Sigmoid colon (tissue), 7 donors: ENCODE measurements at regions of chr5 and their contacts with region 1.

Region 1: DNA sequence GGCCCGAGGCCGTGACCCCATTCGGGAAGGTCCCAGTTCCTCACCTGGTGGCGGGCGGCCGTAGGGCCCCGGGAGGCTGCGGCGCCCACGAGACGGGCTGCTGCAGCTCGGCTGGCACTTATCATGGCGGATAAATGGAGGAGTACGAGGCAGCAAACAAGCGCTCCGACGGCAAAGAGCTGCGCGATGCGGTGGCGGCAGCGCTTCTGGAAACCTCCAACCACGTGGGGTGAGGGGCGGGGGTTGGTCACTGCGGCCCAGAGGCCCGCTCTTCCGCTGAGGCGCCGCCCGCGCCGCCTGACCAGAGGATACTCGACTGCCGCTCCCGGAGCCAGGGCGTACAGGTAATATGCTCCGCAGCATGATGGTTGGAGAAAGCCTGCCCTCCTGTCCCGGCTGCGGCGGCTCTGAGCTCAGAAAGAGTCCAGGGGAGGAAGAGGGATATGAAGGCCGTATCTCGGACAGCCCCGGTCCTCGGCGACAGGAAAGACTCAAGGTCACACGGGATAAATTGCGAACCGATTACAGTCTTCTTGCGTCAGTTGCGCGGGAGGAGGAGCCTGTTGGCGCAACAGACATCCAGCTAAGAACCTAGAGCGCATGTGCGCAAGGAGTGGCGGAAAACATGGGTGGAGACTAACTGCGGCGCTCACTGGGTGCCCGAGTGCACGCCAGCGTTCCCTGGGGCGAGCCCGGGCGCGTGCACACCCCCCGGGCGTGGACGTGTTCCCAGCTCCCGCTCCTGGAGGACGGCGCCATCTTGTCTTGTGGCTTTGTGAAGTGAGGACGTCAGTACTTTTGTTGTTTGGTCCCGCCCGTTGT is at the start of gene HSPA9:
- DNase-seq: peak; percentile 99
- H3K4me3 ChIP-seq: peak within 1 kb of the TSS; percentile 84 to 98 (median 92)
- H3K27ac ChIP-seq: peak within 1 kb of the TSS; percentile 97 to 100 (median 98)
- H3K4me1 ChIP-seq: peaks cover 0 to 26% (median 17%) of the 10 kb centered on the region in 4 donors
- H3K27me3 ChIP-seq: no peaks in the 10 kb centered on the region
- CTCF ChIP-seq: peak in 1 of 4 experiments; percentile 51
- EP300 ChIP-seq: peak in 3 of 4 donors; percentile 0 to 79 (median 31)
- POLR2A ChIP-seq: peak; percentile 78 to 92
- total RNA-seq, gene HSPA9: 148 to 244 (median 192) TPM

Region 2: DNA sequence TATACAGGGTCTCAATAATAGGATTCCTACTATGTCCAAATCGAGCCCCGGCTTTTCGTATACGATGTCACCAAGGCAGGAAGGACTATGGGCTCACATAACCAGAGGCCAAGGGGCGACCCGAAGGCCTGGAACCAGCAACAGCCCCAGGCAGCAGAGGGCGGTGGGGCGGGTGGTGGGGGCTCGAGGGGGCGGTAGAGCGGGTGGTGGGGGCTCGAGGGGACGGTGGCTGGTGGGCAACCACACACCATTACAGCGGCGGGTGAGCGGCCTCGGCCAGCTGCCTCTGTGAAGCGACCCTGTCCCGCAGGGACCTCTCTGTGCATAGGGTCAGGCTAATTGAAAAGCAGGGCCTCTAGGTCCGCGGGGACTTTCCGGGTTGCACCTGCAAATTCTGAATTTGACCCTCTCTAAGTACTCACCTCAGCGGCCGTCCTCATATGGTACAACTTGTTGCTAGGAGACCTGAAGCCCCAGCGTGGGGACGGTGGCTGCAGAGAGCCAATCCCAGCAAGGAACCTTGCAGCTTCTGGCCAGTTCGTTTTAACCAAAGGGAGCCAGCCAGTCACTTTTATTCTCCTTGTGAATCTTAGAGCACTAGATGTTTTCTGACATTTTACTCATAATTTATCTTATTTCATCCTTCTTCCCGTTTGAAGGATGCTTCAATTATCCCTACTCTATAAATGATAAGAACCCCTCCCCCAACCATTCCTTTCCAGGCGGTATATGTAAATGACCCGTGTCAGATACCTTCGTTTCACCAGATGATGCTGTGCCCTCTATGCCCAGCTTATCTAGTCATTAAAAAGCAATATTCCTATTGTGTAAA is 436.2 kb before region 1 on chr5 and contains the start of gene NME5:
- intact Hi-C with region 1: no loop called
- DNase-seq: peak; percentile 72
- H3K4me3 ChIP-seq: peak within 1 kb of the TSS; percentile 42 to 70 (median 62)
- H3K27ac ChIP-seq: peak within 1 kb of the TSS in 2 of 4 donors; percentile 34 to 43
- H3K4me1 ChIP-seq: peaks cover 0 to 13% (median 6%) of the 10 kb centered on the region in 4 donors
- H3K27me3 ChIP-seq: no peaks in the 10 kb centered on the region
- CTCF ChIP-seq: no peak
- EP300 ChIP-seq: no peak
- POLR2A ChIP-seq: no peak
- total RNA-seq, gene NME5: 1.5 to 3.5 (median 2.6) TPM

Region 3: DNA sequence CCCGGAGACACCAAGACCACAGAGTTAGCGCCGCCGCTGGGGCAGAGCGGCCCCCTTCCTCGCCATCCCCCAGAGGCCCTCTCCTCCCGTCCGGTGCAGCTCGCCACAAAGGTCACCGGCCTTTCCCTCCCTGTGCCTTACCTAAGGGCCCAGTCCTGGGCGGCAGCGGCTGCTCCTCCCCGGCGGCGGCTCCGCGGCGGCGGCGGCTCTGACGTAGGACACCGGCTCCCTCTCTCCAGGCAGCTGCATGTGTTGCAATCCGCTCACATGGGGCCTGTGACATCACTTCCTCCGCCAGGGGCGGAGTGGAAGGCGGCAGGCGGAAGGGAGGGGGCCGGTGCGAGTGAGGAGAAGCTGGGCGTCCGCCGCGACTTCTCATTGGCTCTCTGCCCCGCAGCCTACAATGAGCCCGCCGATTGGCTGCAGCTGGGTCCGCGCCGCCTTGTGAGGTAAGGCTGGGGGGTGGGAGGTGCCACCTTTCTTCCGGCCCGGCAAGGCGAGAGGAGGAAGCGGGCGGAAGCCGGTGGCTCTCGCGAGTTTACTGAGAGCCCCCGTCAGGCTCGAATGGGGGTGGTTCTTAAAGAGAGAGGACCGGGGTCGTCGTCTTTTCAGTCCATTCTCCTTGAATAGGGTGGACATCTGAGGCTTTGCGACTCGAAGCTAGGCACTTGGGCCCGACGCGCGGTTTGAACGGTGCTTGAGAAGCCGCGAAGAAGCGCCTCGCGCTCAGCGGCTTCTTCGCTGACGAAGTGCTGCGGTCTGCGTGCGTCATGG is 32.3 kb before region 1 on chr5 and contains the start of gene ETF1:
- intact Hi-C with region 1: loop called (anchors 2 kb)
- DNase-seq: peak; percentile 100
- H3K4me3 ChIP-seq: peak within 1 kb of the TSS; percentile 85 to 99 (median 96)
- H3K27ac ChIP-seq: peak within 1 kb of the TSS; percentile 95 to 100 (median 96)
- H3K4me1 ChIP-seq: peaks cover 0 to 77% (median 70%) of the 10 kb centered on the region in 4 donors
- H3K27me3 ChIP-seq: no peaks in the 10 kb centered on the region
- CTCF ChIP-seq: no peak
- EP300 ChIP-seq: peak in 2 of 4 donors; percentile 49 to 83
- POLR2A ChIP-seq: peak; percentile 99 to 100
- total RNA-seq, gene ETF1: 67.0 to 117 (median 106) TPM

Region 4: DNA sequence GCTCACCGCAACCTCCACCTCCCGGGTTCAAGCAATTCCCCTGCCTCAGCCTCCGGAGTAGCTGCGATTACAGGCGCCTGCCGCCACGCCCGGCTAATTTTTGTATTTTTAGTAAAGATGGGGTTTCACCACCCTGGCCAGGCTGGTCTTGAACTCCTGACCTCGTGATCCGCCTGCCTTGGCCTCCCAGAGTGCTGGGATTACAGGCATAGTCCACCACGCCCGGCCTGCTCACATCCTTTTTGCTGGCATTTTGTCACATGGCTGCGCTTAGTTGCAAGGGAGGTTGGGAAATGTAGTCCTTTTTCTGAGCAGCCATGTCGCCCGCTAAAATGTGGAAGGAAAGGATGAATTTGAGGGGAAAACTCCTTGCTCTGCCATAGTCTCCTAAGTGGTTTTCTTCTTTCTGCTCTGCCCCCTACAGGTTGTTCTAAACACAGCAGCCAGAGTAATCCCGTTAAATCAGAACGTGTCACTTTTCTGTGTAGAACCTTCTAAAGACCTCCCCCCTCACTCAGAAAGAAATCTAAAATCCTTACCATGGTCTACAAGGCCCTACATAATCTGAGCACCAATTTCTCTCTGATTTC is 57.6 kb after region 1 on chr5:
- intact Hi-C with region 1: loop called (anchors 2 kb)
- DNase-seq: peak; percentile 80
- H3K4me3 ChIP-seq: no peak overlapping the region
- H3K27ac ChIP-seq: no peak overlapping the region
- H3K4me1 ChIP-seq: peaks cover 0 to 26% (median 19%) of the 10 kb centered on the region in 4 donors
- H3K27me3 ChIP-seq: no peaks in the 10 kb centered on the region
- CTCF ChIP-seq: peak in 1 of 4 experiments; percentile 19
- EP300 ChIP-seq: no peak
- POLR2A ChIP-seq: no peak

Region 5: GRCh38 chr5:138725138-138725833 is 149.9 kb after region 1 on chr5:
- intact Hi-C with region 1: loop called (anchors 10 kb)
- DNase-seq: peak; percentile 89
- H3K4me3 ChIP-seq: peak overlapping the region in 2 of 4 donors; percentile 1 to 13
- H3K27ac ChIP-seq: peak overlapping the region; percentile 77 to 86 (median 84)
- H3K4me1 ChIP-seq: peaks cover 0 to 22% (median 20%) of the 10 kb centered on the region in 4 donors
- H3K27me3 ChIP-seq: no peaks in the 10 kb centered on the region
- CTCF ChIP-seq: no peak
- EP300 ChIP-seq: no peak
- POLR2A ChIP-seq: no peak

Region 6: DNA sequence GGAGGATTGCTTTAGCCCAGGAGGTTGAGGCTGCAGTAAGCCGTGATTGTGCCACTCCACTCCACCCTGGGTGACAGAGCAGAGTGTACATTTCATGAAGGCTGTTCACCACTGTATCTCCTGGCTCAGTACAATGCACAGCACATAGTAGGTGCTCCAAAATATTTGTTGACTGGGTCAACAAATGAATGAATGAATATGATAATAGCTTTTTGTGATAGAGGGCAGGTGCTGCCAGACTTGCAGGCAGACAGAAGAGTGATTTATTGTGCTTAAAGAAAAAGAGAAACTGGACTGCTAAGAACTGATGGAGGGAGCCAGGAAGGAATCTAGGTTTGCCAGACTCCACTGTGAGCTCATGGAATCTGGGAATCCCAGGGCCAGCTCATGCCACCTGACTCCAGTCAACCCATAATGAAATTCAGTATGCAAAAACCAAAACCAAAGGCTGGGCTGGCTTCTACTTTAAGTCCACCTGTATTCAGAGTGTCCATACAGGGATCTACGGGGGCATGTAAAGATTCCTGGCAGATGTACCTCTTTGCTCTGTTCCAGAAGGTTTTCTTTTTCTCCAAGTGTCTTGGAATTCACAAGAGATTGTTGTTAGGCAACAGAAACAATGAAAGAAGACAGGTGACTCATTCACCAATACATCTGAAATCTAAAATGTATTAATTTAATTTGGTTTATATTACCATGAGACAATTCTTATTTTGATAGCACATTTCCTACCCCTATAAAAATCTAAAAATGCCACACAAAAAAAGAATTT is 162.3 kb after region 1 on chr5:
- intact Hi-C with region 1: no loop called
- DNase-seq: no peak
- H3K4me3 ChIP-seq: no peak overlapping the region
- H3K27ac ChIP-seq: no peak overlapping the region
- H3K4me1 ChIP-seq: no peaks in the 10 kb centered on the region
- H3K27me3 ChIP-seq: no peaks in the 10 kb centered on the region
- CTCF ChIP-seq: no peak
- EP300 ChIP-seq: no peak
- POLR2A ChIP-seq: no peak

Region 7: DNA sequence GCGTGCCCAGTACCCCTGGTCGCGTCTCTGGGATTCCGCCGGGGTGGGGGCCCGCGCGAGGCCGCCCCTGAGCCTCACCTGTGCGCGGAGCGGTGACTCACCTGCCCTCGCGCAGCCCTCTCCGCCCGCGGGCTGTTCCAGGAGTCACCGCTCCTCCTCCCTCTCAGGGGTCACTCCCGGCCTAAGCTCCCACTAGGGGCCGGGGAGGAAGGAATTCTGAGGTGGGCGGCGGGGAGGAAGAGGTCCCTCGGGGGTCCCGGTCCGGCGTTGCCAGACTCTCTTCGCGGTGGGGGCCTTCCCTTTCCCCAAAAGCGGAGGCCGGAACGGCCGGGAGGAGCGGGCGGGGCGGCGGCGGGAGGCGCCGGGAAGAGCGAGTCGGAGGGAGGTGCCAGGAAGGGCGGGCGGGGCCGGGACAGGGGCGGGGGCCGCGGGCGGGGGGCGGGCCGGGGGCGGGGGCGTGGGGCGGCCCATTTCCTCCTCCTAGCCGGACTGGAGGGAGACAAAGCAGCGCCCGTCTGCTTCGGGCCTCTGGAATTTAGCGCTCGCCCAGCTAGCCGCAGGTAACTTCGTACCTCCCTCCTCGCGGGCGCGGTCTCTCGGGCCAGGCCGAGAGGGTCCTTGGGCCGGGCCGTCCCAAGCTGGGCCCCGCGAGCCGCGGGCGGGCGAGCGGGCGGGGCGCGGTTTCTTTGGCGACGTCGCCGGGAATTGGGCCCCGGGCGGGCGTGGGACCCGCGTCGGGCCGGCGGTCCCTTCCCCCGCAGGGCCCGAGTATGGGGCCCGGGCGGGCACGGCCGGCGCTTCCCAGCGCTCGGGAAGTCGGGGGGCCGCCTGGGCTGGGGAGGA is 177.8 kb after region 1 on chr5 and contains the start of gene CTNNA1:
- intact Hi-C with region 1: loop called (anchors 1 kb)
- DNase-seq: peak; percentile 89
- H3K4me3 ChIP-seq: peak within 1 kb of the TSS; percentile 88 to 100 (median 94)
- H3K27ac ChIP-seq: peak within 1 kb of the TSS; percentile 99 to 100 (median 100)
- H3K4me1 ChIP-seq: peaks cover 0 to 33% (median 30%) of the 10 kb centered on the region in 4 donors
- H3K27me3 ChIP-seq: no peaks in the 10 kb centered on the region
- CTCF ChIP-seq: no peak
- EP300 ChIP-seq: peak in 1 of 4 donors; percentile 33
- POLR2A ChIP-seq: peak; percentile 11 to 17
- total RNA-seq, gene CTNNA1: 165 to 256 (median 194) TPM

Region 8: GRCh38 chr5:139197710-139198669 is 622.6 kb after region 1 on chr5 and contains the start of gene SIL1:
- intact Hi-C with region 1: loop called (anchors 10 kb)
- DNase-seq: peak; percentile 98
- H3K4me3 ChIP-seq: peak within 1 kb of the TSS; percentile 63 to 75 (median 69)
- H3K27ac ChIP-seq: peak within 1 kb of the TSS; percentile 90 to 95 (median 92)
- H3K4me1 ChIP-seq: peaks cover 0 to 18% (median 10%) of the 10 kb centered on the region in 4 donors
- H3K27me3 ChIP-seq: no peaks in the 10 kb centered on the region
- CTCF ChIP-seq: no peak
- EP300 ChIP-seq: no peak
- POLR2A ChIP-seq: peak; percentile 80 to 84
- total RNA-seq, gene SIL1: 23.2 to 39.2 (median 34.9) TPM